GM12878 (cell line): ENCODE measurements at regions of chr19 and their contacts with region 1.

Region 1: DNA sequence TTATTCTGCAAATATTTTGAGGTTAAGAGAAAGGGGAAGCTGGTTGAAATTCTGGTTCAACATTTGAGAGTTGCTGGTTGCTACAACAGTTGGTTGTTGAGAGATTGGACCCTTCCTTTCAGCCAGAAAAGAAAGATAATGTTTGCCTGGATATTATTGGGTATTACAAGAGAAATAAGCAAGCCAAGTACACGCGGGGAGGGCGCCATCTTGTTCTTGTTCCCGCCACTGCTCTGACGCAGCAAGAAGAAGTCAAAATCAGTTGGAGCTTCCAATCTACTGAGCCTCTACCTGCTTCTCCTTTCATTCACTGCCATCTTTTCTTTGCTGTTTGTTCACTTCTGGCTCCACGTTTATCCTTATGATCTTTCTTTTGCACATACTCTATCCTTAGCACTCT is 18.4 kb downstream of the BSPH1 start:
- DNase-seq: no peak
- ATAC-seq: no peak
- H3K4me3 ChIP-seq: no peak overlapping the region
- H3K27ac ChIP-seq: no peak overlapping the region
- H3K4me1 ChIP-seq: no peaks in the 10 kb centered on the region
- H3K27me3 ChIP-seq: no peaks in the 10 kb centered on the region
- CTCF ChIP-seq: no peak
- EP300 ChIP-seq: no peak
- POLR2A ChIP-seq: no peak
- RAD21 ChIP-seq: no peak

Region 2: GRCh38 chr19:48158210-48158790 is 184.8 kb after region 1 on chr19:
- CTCF ChIA-PET with region 1: no interaction called
- POLR2A ChIA-PET with region 1: no interaction called
- RAD21 ChIA-PET with region 1: no interaction called
- SMC1A ChIA-PET with region 1: no interaction called
- in situ Hi-C with region 1: loop called (anchors 5 kb)
- intact Hi-C with region 1: no loop called
- DNase-seq: no peak
- ATAC-seq: no peak
- H3K4me3 ChIP-seq: no peak overlapping the region
- H3K27ac ChIP-seq: no peak overlapping the region
- H3K4me1 ChIP-seq: no peaks in the 10 kb centered on the region
- H3K27me3 ChIP-seq: no peaks in the 10 kb centered on the region
- CTCF ChIP-seq: no peak
- EP300 ChIP-seq: no peak
- POLR2A ChIP-seq: no peak
- RAD21 ChIP-seq: no peak

Region 3: DNA sequence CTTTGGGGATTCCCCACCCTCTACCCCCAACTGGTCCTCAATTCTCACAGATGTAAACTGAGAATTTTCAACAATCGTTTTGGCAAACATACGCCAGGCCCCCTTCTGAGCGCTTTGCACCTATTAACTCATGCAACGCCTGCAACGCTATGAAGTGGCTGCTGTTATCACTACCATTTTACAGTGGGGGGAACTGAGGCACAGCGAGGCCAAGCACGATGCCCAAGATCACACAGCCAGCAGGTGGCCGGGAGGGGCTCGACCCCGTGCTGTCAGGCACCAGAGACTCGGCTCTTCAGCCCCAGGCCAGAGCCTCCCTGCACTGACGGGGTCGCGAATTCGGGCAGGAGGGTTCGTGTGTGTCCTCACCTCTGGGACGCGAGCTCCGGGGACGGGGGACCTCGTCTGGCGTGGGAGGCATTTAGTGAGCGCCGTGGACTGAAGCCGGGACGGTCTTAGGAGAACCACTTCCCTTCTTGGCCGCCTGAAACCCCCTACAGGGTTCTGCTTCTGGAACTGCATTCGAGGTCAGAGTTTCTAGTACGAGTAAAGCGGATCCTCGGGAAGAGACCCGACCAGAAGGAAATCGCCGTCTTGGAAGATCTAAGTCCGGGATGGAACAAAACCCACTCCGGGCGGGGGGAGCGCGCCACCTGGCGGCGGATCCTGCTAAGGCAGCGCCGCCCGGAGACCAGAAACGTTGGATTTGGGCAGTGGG is 317.4 kb after region 1 on chr19:
- CTCF ChIA-PET with region 1: no interaction called
- POLR2A ChIA-PET with region 1: no interaction called
- RAD21 ChIA-PET with region 1: no interaction called
- SMC1A ChIA-PET with region 1: no interaction called
- in situ Hi-C with region 1: loop called (anchors 10 kb)
- intact Hi-C with region 1: no loop called
- DNase-seq: no peak
- ATAC-seq: peak; percentile 81
- H3K4me3 ChIP-seq: peak overlapping the region; percentile 41; the same call in 1 of the 2 replicates
- H3K27ac ChIP-seq: no peak overlapping the region
- H3K4me1 ChIP-seq: peaks cover 3% of the 10 kb centered on the region; the same call in 1 of the 2 replicates
- H3K27me3 ChIP-seq: no peaks in the 10 kb centered on the region
- CTCF ChIP-seq: peak; percentile 84 to 97 (median 96)
- EP300 ChIP-seq: no peak
- POLR2A ChIP-seq: no peak
- RAD21 ChIP-seq: peak; percentile 75